B cell (primary cell): ENCODE measurements at regions of chrX and their contacts with region 1.

Region 1: GRCh38 chrX:1554469-1555210 is 17.7 kb upstream of the P2RY8 start:
- DNase-seq: peak; percentile 89
- ATAC-seq: peak; percentile 98
- H3K4me3 ChIP-seq: peak overlapping the region in 1 of 5 experiments; percentile 23
- H3K4me3 Mint-ChIP-seq: peak overlapping the region; percentile 78
- H3K27ac ChIP-seq: peak overlapping the region; percentile 85 to 99
- H3K27ac Mint-ChIP-seq: peak overlapping the region; percentile 99
- H3K4me1 ChIP-seq: peaks cover 50 to 59% of the 10 kb centered on the region in 2 donors
- H3K4me1 Mint-ChIP-seq: peaks cover 53% of the 10 kb centered on the region
- H3K27me3 ChIP-seq: no peaks in the 10 kb centered on the region
- H3K27me3 Mint-ChIP-seq: no peaks in the 10 kb centered on the region
- CTCF ChIP-seq: no peak

Region 2: DNA sequence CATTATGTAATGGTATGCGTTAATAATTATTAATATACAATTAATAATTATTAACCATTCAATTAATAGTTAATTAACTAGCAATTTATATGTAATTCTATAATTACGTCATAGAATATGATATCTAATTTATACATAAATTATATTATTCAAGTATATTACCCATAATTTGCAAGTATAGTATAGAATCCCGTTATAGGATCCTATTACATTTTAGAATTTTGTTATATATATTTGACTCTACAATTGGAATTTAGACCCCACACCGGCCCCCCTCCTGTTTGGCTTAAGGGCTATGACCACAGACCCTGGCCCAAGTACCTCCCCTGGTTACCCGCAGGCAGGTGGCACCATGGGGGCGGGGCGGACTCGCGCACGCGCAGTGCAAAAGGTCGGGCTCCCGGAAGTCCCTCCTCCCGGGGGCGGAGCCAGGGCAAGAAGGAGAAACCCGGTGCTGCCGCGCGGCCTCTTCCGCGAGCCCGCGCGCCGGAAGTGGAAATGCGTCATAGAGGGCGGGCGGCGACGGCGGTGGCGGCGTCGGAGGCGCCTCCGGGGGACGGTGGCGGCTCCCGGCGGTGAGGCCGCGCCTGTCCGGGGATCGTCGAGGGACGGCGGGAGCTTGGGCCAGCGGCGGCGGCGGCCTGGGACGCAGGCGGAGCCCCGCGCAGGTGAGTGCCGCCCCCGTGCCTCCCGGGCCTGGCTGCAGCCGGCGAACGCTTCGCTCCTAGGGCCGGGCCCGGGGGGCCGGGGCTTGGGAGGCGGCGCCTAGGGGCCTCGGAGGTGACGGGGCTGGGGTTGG is 36.7 kb after region 1 on chrX and contains the start of gene AKAP17A:
- CTCF ChIA-PET with region 1: no interaction called
- POLR2A ChIA-PET with region 1: no interaction called
- intact Hi-C with region 1: loop called (anchors 2 kb)
- DNase-seq: peak; percentile 97
- ATAC-seq: peak; percentile 88
- H3K4me3 ChIP-seq: peak within 1 kb of the TSS; percentile 55 to 90 (median 78)
- H3K4me3 Mint-ChIP-seq: peak within 1 kb of the TSS; percentile 95
- H3K27ac ChIP-seq: peak within 1 kb of the TSS; percentile 61 to 81
- H3K27ac Mint-ChIP-seq: peak within 1 kb of the TSS; percentile 95
- H3K4me1 ChIP-seq: peaks cover 20 to 47% of the 10 kb centered on the region in 2 donors
- H3K4me1 Mint-ChIP-seq: peaks cover 40% of the 10 kb centered on the region
- H3K27me3 ChIP-seq: no peaks in the 10 kb centered on the region
- H3K27me3 Mint-ChIP-seq: no peaks in the 10 kb centered on the region
- CTCF ChIP-seq: peak; percentile 26
- total RNA-seq, gene AKAP17A: 126 and 129 TPM in 2 replicates